Heart left ventricle (tissue), 16 donors: ENCODE measurements at regions of chr5 and their contacts with region 1.

Region 1: DNA sequence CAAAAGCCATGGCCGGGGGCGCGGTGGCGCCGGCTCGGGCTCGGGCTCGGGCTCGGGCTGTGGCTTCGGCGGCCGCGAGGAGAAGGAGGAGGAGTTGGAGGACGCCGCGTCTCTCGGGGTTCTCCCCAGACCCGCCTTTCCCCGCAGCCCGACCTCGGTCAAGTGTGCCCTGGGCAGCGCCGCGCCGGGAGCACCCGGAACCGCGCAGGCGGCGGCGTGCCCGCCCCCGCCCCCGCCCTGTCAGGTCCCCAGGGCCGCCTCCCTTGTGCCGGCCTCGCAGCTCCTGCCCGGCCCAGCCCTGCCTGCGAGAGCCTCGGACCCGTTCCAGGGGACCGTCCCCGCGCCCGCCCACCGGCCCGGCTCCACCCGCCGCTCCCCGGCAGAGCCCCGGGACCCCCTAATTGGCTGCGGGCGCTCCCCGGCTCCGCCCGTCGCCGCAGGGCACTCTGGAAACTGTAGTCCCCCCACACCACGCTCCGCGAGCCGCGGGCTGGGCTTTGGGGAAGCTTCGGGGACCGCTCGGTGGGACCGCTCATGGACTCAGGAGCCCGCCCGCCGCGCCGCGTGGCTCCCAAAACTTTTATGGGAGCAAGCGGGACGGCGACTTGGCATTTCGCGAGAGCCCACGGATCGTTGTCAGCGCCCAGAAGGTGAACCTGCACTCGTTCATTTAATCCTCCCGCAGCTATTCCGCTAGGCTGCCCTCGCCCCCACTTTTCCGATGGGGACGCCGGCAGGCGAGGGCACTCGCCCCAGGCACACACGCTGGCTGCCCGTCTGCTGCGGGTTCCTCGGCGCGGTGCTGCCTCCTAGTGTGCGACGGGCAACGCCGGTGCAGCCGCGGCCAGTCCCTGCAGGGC is at the start of gene STK10:
- DNase-seq: peak; percentile 93 to 98 (median 95)
- ATAC-seq: peak; percentile 91 to 97 (median 95)
- H3K4me3 ChIP-seq: peak within 1 kb of the TSS; percentile 67 to 97 (median 89)
- H3K27ac ChIP-seq: peak within 1 kb of the TSS; percentile 63 to 98 (median 92)
- H3K4me1 ChIP-seq: peaks cover 3 to 38% (median 22%) of the 10 kb centered on the region in 12 donors
- H3K27me3 ChIP-seq: no peaks in the 10 kb centered on the region
- CTCF ChIP-seq: peak; percentile 83 to 97 (median 94)
- POLR2A ChIP-seq: peak in 1 of 2 donors; percentile 74
- total RNA-seq, gene STK10: 5.5 to 52.9 (median 10.3) TPM

Region 2: DNA sequence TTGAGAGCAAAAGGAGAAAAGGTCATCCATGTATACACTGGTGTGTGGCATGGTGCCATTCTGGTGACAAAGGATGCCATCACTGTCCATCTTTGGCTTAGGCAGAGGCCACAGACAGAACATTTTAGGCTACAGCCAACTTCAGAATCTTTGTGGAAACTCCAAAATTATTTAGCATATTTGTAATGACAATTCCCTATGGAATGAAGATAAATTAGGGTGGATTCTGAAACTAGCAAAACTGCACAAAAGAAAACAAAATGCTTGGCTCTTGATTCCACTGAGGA is 274.3 kb before region 1 on chr5:
- intact Hi-C with region 1: loop called in 6 of 10 experiments (anchors 2 to 10 kb)
- DNase-seq: no peak
- ATAC-seq: peak in 1 of 4 donors; percentile 27
- H3K4me3 ChIP-seq: no peak overlapping the region
- H3K27ac ChIP-seq: no peak overlapping the region
- H3K4me1 ChIP-seq: peaks cover 0 to 47% (median 30%) of the 10 kb centered on the region in 12 donors
- H3K27me3 ChIP-seq: no peaks in the 10 kb centered on the region
- CTCF ChIP-seq: no peak
- POLR2A ChIP-seq: no peak

Region 3: DNA sequence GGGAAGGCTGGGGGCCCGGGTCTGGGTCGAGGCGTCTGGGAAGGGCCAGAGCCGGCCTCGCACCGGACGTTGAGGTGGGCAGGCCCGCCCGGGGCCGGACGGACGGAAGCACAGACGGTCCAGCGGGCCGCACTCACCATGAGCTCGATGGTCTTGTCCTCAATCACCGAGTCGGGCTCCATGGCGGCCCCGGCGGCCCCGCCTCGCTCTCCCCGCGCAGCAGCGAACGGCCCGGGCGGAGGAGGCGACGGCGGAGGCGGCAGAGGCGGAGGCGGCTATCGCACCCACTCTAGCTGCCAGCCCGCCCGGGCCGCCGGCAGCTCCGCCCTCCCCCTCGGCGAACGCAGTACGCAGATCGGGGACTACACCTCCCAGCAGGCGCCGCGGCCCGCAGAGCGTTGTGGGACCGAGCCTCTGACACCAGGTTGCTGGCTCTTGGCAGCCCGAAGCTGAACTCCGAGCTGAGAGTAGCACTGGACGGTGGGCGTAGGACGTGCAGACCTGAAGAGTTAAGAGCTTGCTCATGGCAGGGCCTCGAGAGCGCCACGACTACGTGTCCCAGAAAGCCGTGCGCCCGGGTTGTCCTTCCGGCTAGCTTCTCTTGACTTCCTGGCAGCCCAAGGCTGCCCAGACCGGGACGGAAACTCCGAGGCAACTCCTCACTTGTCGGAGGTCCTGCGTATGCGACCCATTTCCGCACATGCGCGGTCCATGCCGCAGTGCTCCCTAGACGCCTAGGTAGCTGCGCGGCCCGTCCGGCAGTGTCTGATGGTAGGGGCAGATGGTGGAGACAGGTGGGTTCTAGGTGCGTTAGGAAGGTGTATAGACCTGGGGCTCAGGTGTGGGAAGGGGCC is 181.7 kb before region 1 on chr5 and contains the start of gene FBXW11:
- intact Hi-C with region 1: loop called in 1 of 10 experiments (anchors 5 kb)
- DNase-seq: peak; percentile 95 to 98 (median 98)
- ATAC-seq: peak; percentile 94 to 96 (median 95)
- H3K4me3 ChIP-seq: peak within 1 kb of the TSS; percentile 74 to 96 (median 87)
- H3K27ac ChIP-seq: peak within 1 kb of the TSS; percentile 92 to 99 (median 96)
- H3K4me1 ChIP-seq: peaks cover 4 to 64% (median 47%) of the 10 kb centered on the region in 12 donors
- H3K27me3 ChIP-seq: no peaks in the 10 kb centered on the region
- CTCF ChIP-seq: no peak
- POLR2A ChIP-seq: peak in 1 of 2 donors; percentile 75
- total RNA-seq, gene FBXW11: 63.2 to 110 (median 85.5) TPM

Region 4: GRCh38 chr5:172123269-172123692 is 65.0 kb before region 1 on chr5:
- intact Hi-C with region 1: loop called in 1 of 10 experiments (anchors 5 kb)
- DNase-seq: peak; percentile 76 to 92 (median 88)
- ATAC-seq: peak; percentile 93 to 96 (median 94)
- H3K4me3 ChIP-seq: no peak overlapping the region
- H3K27ac ChIP-seq: no peak overlapping the region
- H3K4me1 ChIP-seq: peaks cover 0 to 28% (median 16%) of the 10 kb centered on the region in 12 donors
- H3K27me3 ChIP-seq: no peaks in the 10 kb centered on the region
- CTCF ChIP-seq: peak; percentile 22 to 64 (median 48)
- POLR2A ChIP-seq: no peak

Region 5: DNA sequence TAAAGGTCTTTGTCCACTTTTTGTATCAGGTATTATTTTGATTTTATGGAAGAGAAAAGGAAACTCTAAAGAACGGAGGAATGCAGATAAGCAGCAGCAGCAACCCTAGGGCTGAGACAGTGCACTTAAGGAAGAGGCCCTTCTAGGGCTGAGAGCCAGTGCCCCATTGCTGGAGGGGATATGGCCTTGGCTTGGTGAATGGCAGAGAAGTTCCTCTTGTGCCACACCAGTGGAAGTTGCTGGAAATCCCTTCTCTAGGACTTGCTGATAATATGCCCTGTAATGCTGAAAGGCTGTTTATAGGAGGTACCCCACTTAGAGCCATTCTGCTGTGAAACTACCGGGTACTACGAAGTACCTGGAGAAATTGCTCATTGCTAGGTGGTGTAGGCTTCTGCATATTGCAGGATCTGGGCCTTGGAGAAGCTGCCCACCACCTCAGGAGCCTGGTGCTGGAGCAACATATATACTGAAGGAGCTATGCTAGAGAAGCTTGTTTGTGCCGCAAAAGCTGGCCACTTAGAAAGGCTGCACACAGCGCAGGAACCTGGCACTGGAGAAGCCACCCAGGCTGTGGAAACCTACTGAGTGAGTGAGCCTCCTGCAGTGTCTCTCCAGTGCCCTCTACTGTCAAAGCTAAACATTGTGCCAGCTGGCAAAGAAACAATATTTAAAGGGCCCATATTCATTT is 104.9 kb after region 1 on chr5:
- intact Hi-C with region 1: loop called in 4 of 10 experiments (anchors 2 to 10 kb)
- DNase-seq: peak in 4 of 5 donors; percentile 64 to 73 (median 66)
- ATAC-seq: peak; percentile 91 to 98 (median 97)
- H3K4me3 ChIP-seq: no peak overlapping the region
- H3K27ac ChIP-seq: no peak overlapping the region
- H3K4me1 ChIP-seq: peaks cover 0 to 6% (median 0%) of the 10 kb centered on the region in 12 donors
- H3K27me3 ChIP-seq: no peaks in the 10 kb centered on the region
- CTCF ChIP-seq: peak; percentile 67 to 90 (median 81)
- POLR2A ChIP-seq: no peak

Region 6: DNA sequence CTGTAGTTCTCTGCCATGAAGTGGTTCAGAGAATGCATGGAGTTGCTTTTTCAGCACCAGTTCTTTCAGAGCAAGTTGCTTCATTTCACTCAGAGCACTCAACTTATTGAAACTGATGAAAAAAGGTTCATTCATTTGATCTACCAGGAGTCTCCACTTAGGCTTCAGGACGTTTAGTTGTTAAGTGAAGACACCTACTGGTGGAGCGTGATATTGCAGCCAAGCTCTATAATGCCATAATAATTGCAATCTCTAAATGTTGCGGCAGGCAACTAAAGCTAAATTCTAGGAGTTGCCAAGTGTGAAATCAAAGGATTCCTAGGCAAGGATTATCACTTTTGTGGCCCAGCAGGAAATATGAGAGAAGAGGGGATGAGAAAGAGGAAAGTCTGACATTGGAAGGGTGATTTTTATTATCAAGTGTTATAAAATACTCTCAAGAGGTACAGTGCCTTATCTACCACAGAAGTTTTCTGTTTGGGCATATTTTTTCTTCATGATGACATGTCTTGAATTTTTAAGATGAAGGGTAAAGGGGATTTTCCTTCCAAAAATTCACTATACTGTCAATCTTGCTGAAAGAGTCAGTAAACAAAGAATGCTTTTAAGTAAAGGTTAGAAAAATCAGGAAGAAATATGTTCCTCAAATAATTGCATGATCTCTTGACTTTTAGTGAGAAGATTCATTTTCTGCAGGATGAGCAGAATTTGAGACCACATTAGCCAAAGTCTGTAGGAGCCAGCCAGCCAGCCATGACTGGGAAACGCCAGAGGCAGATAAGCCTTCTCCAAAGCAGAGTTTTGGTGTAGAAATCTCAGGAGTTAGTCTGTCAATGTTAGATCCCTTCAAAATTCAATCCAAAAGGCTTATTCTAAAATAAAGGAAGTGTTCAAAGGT is 182.6 kb after region 1 on chr5:
- intact Hi-C with region 1: no loop called
- DNase-seq: no peak
- ATAC-seq: peak in 1 of 4 donors; percentile 14
- H3K4me3 ChIP-seq: no peak overlapping the region
- H3K27ac ChIP-seq: no peak overlapping the region
- H3K4me1 ChIP-seq: no peaks in the 10 kb centered on the region
- H3K27me3 ChIP-seq: no peaks in the 10 kb centered on the region
- CTCF ChIP-seq: peak in 11 of 12 donors; percentile 11 to 58 (median 40)
- POLR2A ChIP-seq: no peak

Region 7: GRCh38 chr5:172637122-172637580 is 448.9 kb after region 1 on chr5:
- intact Hi-C with region 1: no loop called
- DNase-seq: peak in 1 of 5 donors; percentile 74
- ATAC-seq: peak; percentile 37 to 76 (median 48)
- H3K4me3 ChIP-seq: no peak overlapping the region
- H3K27ac ChIP-seq: no peak overlapping the region
- H3K4me1 ChIP-seq: peaks cover 0 to 17% (median 8%) of the 10 kb centered on the region in 12 donors
- H3K27me3 ChIP-seq: peaks cover 0 to 11% (median 0%) of the 10 kb centered on the region in 9 donors
- CTCF ChIP-seq: peak in 1 of 12 donors; percentile 7
- POLR2A ChIP-seq: no peak